ENCODE measurements at regions of chr6 and their contacts with region 1.

Region 1: GRCh38 chr6:145761584-145761983 is 26.3 kb upstream of the EPM2A start:
- DNase-seq: no peak
- H3K4me3 ChIP-seq: no peak overlapping the region
- H3K4me3 Mint-ChIP-seq: no peak overlapping the region
- H3K27ac ChIP-seq: no peak overlapping the region
- H3K27ac Mint-ChIP-seq: no peak overlapping the region
- H3K4me1 ChIP-seq: no peaks in the 10 kb centered on the region
- H3K4me1 Mint-ChIP-seq: no peaks in the 10 kb centered on the region
- H3K27me3 ChIP-seq: no peaks in the 10 kb centered on the region
- H3K27me3 Mint-ChIP-seq: no peaks in the 10 kb centered on the region

Region 2: DNA sequence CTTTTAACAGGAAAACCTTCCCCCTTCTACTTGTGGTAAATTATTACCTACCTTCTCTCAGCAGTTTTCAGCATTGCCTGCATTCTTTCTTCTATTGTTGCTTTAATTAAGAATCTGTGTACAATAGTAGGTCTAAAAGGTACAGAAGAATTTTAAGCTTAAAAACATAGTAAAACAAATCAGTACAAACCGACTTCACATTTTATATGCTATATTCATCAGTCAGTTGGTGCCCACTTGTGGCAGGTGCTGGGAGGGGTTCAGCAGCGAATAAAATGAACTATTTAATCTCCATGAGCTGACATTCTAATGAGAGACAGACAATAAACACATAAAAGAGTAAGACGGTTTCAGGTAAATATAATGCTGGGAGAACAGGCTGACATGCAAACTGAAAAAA is 126.4 kb after region 1 on chr6:
- CTCF ChIA-PET with region 1: no interaction called
- POLR2A ChIA-PET with region 1: no interaction called
- intact Hi-C with region 1: loop called (anchors 2 kb)
- DNase-seq: peak in 2 of 5 donors; percentile 9 to 17
- H3K4me3 ChIP-seq: no peak overlapping the region
- H3K4me3 Mint-ChIP-seq: no peak overlapping the region
- H3K27ac ChIP-seq: no peak overlapping the region
- H3K27ac Mint-ChIP-seq: no peak overlapping the region
- H3K4me1 ChIP-seq: no peaks in the 10 kb centered on the region
- H3K4me1 Mint-ChIP-seq: no peaks in the 10 kb centered on the region
- H3K27me3 ChIP-seq: no peaks in the 10 kb centered on the region
- H3K27me3 Mint-ChIP-seq: no peaks in the 10 kb centered on the region